ENCODE measurements at regions of chr1 and their contacts with region 1.

Region 1: GRCh38 chr1:21232044-21232443 is 55.3 kb upstream of the EIF4G3 start:
- DNase-seq: peak; percentile 79
- H3K4me3 Mint-ChIP-seq: no peak overlapping the region
- H3K27ac Mint-ChIP-seq: no peak overlapping the region
- H3K4me1 Mint-ChIP-seq: no peaks in the 10 kb centered on the region
- H3K27me3 Mint-ChIP-seq: no peaks in the 10 kb centered on the region
- CTCF ChIP-seq: peak; percentile 77

Region 2: DNA sequence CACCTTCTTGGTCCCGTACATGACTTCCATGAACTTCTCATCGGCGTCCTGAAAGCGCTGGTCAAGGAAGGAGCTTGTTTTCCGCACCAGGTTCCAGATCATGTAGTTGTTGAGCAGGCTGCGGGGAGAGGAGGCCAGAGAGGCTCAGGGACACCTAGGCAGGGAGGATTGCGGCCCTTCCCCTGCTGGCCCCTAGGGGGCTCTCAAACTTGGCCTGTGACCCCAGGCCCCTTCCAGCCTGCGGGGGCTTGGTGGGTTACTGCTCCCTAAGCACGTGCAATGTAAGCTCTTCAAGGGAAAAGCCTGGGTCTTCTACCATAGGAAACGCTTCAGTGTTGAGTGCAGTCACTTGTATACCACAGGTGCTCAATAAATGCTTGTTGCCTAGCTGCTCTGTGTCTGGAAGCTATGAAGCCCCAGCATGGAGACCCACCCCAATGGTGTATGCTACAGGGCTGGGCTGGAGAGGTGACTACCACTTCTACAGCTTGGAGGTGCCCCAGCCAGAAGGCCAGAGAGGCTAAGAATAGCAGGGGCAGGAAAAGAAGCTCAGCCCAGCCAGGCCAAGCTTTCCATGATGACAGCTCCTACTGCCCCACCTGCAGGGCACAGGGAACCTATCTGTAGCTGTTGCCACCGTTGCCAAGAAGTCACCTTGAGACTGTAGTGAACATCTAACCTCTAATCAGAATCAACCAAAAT is 13.1 kb after region 1 on chr1:
- CTCF ChIA-PET with region 1: interaction called, 14 read pairs
- POLR2A ChIA-PET with region 1: no interaction called
- intact Hi-C with region 1: no loop called
- DNase-seq: no peak
- H3K4me3 Mint-ChIP-seq: no peak overlapping the region
- H3K27ac Mint-ChIP-seq: no peak overlapping the region
- H3K4me1 Mint-ChIP-seq: no peaks in the 10 kb centered on the region
- H3K27me3 Mint-ChIP-seq: no peaks in the 10 kb centered on the region
- CTCF ChIP-seq: peak; percentile 8

Region 3: DNA sequence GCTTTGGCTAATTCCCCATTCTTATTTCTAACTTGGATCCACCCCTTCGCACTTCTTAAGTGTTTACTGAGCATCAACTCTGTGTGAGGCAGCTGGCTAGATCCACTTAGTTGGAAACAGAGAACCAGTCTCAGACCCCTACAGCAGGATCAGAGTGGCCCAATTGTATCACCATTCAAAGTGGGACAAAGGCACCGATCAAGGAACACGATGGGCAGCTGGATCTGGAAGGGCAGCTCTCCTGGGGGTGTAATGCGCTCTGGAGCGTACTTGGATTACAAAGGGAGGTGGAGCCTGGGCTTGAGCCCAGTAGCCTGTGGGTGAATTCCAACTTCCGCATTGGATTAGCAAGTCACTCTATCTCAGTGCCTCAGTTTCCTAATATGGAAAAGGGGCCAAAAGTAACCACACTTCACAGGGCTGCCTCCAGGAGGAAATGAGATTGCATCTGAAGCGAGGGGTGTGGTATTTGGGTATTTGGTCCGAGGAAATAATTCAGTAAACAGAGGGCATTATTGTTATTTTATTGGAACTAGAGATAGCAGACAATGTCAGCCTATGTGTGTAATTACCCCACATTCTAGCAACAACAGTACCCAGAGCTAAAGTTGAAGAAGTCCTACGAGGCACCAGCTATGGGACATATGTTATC is 46.3 kb after region 1 on chr1:
- CTCF ChIA-PET with region 1: no interaction called
- POLR2A ChIA-PET with region 1: no interaction called
- intact Hi-C with region 1: no loop called
- DNase-seq: no peak
- H3K4me3 Mint-ChIP-seq: no peak overlapping the region
- H3K27ac Mint-ChIP-seq: no peak overlapping the region
- H3K4me1 Mint-ChIP-seq: peaks cover 7% of the 10 kb centered on the region
- H3K27me3 Mint-ChIP-seq: no peaks in the 10 kb centered on the region
- CTCF ChIP-seq: no peak

Region 4: DNA sequence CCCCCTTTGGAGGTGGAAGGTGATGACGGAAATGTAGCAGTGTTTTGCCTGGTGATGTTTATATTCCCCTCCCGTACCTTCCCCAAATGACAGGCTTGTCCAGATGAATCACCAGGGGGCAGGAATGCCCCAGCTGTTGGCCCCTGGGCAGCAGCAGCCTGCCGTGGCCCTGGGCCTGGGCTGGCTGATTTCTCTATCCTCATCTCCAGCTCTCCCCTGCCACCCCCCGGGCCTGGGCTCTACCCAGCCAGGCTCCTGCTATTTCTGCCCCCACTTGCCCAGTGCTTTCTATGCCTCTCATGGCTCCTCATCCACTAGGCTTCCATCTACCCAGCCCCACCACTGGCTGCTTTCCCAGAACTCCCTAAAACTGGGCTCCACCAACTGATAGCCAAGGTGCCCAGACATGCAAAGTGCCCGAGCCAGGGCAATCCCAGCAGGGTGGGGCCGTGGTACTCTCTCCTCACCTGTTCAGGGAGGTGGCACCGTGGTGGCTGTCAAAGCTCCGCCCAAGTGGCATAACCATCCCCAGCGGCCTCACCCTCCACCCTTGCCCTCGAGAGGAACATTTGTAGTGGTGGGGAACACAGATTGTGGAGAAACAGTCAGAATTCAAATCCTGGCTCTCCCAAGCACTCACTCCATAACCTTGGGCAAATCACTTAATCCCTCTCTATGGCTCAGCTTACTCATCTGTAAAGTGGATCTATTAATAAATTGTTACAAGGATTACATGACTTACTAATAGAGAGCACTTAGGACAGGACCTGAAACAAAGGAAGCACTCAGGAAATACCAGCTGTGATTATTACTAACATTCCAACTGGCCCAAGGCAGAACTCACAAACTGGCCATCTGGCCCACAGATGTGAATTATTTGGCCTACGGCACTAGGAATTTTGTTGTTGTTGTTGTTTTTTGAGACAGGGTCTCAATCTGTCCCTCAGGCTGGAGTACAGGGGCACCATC is 71.0 kb after region 1 on chr1:
- CTCF ChIA-PET with region 1: interaction called, 6 read pairs
- POLR2A ChIA-PET with region 1: no interaction called
- intact Hi-C with region 1: loop called (anchors 2 kb)
- DNase-seq: peak; percentile 53
- H3K4me3 Mint-ChIP-seq: peak overlapping the region; percentile 44
- H3K27ac Mint-ChIP-seq: peak overlapping the region; percentile 65
- H3K4me1 Mint-ChIP-seq: peaks cover 8% of the 10 kb centered on the region
- H3K27me3 Mint-ChIP-seq: no peaks in the 10 kb centered on the region
- CTCF ChIP-seq: peak; percentile 17

Region 5: GRCh38 chr1:21324368-21325141 is 92.5 kb after region 1 on chr1:
- CTCF ChIA-PET with region 1: interaction called, 10 read pairs
- POLR2A ChIA-PET with region 1: no interaction called
- intact Hi-C with region 1: no loop called
- DNase-seq: peak; percentile 92
- H3K4me3 Mint-ChIP-seq: peak overlapping the region; percentile 28
- H3K27ac Mint-ChIP-seq: peak overlapping the region; percentile 90
- H3K4me1 Mint-ChIP-seq: peaks cover 57% of the 10 kb centered on the region
- H3K27me3 Mint-ChIP-seq: no peaks in the 10 kb centered on the region
- CTCF ChIP-seq: no peak

Region 6: GRCh38 chr1:21334214-21335087 is 102.4 kb after region 1 on chr1:
- CTCF ChIA-PET with region 1: interaction called, 27 read pairs
- POLR2A ChIA-PET with region 1: no interaction called
- intact Hi-C with region 1: no loop called
- DNase-seq: peak; percentile 88
- H3K4me3 Mint-ChIP-seq: peak overlapping the region; percentile 68
- H3K27ac Mint-ChIP-seq: peak overlapping the region; percentile 93
- H3K4me1 Mint-ChIP-seq: peaks cover 44% of the 10 kb centered on the region
- H3K27me3 Mint-ChIP-seq: no peaks in the 10 kb centered on the region
- CTCF ChIP-seq: peak; percentile 83

Region 7: GRCh38 chr1:21659099-21659923 is 427.3 kb after region 1 on chr1:
- CTCF ChIA-PET with region 1: interaction called, 5 read pairs
- POLR2A ChIA-PET with region 1: no interaction called
- intact Hi-C with region 1: loop called (anchors 10 kb)
- DNase-seq: peak; percentile 62
- H3K4me3 Mint-ChIP-seq: peak overlapping the region; percentile 35
- H3K27ac Mint-ChIP-seq: no peak overlapping the region
- H3K4me1 Mint-ChIP-seq: no peaks in the 10 kb centered on the region
- H3K27me3 Mint-ChIP-seq: peaks cover 29% of the 10 kb centered on the region
- CTCF ChIP-seq: peak; percentile 99

Measured in MCF 10A (cell line).